Activated CD4-positive, alpha-beta T cell treated with anti-CD3 and anti-CD28 coated beads for 36 hours (primary cell): ENCODE measurements at regions of chr20 and their contacts with region 1.

Region 1: DNA sequence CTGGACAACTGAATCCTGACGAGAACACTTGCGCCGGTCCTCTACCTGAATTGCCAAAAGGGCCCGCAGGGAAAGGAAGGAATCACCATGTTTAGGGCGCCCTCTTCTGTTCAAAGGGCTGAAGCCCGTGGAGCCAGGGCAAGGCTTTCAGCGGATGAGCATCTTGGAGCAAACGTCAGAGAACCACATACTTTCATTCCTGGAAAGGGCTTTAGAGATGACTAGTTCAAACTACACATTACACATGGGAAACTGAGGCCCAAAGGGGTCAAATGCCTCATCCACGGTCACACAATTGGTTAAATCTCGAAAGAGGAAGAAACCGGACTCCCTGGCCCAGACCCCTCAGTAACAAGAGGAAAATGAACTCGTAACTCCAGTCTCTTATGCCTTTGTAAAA is 11.5 kb upstream of the ZNF133 start:
- DNase-seq: peak; percentile 81
- ATAC-seq: peak; percentile 93
- H3K4me3 Mint-ChIP-seq: no peak overlapping the region
- H3K27ac Mint-ChIP-seq: no peak overlapping the region
- H3K4me1 Mint-ChIP-seq: no peaks in the 10 kb centered on the region
- H3K27me3 Mint-ChIP-seq: peaks cover 33% of the 10 kb centered on the region

Region 2: GRCh38 chr20:17968366-17969279 is 308.2 kb before region 1 on chr20 and contains the starts of genes MGME1 and SNX5:
- CTCF ChIA-PET with region 1: no interaction called
- POLR2A ChIA-PET with region 1: no interaction called
- intact Hi-C with region 1: loop called in 1 of 2 experiments (anchors 2 kb)
- DNase-seq: peak; percentile 100
- ATAC-seq: peak; percentile 91
- H3K4me3 Mint-ChIP-seq: peak within 1 kb of the TSS; percentile 87
- H3K27ac Mint-ChIP-seq: peak within 1 kb of the TSS; percentile 99
- H3K4me1 Mint-ChIP-seq: peaks cover 49% of the 10 kb centered on the region
- H3K27me3 Mint-ChIP-seq: no peaks in the 10 kb centered on the region
- total RNA-seq, gene MGME1: 24.1 to 29.7 TPM
- total RNA-seq, gene SNX5: 204 to 227 TPM

Region 3: DNA sequence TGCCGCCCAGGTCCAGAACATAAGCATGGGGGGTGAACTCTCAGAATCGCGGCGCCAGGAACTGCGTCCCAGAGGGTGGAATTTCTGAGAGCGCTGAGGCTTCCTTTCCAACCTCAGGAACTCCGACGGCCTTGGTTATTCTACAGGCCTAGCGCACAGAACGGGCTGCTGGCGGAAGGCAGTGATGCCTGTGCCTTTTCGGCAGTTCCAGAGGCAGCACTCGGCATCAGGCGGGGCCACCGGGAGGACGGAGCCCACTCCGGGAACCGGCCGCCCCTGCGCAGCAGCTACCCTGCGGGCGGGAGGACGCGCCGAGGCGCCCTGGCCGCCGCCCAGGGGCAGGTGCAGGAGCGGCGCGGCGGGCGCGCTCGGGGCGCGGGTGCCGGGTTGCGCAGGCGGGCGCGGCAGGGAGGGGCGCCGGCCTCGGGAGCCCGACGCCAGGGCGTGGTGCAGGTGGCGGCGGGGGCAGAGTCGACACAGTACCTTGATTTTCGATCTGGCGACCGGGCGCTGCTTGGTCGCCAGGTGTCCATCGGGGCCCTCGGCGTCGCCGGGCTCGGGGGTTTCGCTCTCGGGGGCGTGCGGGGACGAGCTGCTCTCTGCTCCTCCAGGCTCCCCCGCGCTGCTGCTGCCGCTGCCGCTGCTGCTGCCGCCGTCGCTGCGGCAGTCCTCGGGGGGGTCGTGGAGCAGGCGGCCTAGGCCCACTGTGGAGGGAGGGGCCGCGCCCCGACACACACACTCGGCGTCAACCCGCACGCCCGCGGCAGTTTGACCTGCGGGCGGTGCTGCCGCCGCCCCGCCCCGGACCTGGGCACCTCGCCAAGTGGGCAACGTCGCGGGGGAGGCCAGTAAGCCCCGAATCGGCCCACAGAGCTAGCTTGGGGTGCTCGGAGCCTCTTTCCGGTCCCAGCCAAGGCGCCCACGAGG is 220.4 kb before region 1 on chr20:
- CTCF ChIA-PET with region 1: interaction called, 3 read pairs
- POLR2A ChIA-PET with region 1: no interaction called
- intact Hi-C with region 1: loop called (anchors 2 to 10 kb)
- DNase-seq: peak; percentile 28
- ATAC-seq: peak; percentile 80
- H3K4me3 Mint-ChIP-seq: peak overlapping the region; percentile 44
- H3K27ac Mint-ChIP-seq: no peak overlapping the region
- H3K4me1 Mint-ChIP-seq: peaks cover 8% of the 10 kb centered on the region
- H3K27me3 Mint-ChIP-seq: peaks cover 54% of the 10 kb centered on the region